Activated CD4-positive, alpha-beta T cell treated with anti-CD3 and anti-CD28 coated beads for 36 hours (primary cell): ENCODE measurements at regions of chr19 and their contacts with region 1.

Region 1: DNA sequence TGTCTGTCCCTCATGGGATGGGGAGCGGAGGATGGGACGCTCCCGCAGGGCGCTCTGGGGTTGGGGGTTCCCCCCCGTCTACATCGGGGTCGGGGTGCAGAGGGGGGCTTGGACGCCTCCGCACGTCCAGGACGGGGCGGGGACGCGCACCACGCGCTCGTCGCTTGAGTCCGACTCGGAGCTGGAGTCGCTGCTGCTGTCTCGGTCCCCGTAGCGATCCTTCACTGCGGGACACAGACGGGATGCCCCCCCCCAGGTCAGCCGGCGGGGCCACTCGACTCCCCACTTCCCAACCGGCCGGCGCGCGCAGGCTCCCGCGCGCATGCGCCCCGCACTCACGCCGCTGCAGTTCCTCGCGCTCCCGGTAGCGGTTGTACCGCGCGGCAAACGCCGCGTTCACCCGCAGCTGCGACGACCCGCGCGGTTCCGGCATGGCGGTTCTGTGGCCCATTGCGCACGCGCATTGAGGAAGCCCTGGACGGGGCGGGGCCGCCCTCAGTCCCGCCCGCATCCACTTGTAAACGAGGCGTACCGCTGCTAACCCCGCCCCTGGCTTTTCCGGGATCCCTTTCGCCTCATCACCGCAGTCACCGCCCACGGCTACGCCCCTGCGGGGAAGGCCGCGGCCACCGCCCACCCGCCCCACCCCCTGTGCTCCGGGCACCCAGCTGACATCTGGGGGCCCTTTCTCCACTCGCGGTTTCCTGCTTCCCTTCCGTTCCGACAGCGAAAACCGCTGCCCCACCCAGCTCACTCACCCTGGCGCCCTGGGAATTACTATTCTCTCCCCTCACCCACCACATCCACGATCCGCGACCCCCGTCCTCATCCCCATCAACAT is at the start of gene KRI1:
- DNase-seq: peak; percentile 100
- ATAC-seq: peak; percentile 39
- H3K4me3 Mint-ChIP-seq: peak within 1 kb of the TSS; percentile 98
- H3K27ac Mint-ChIP-seq: peak within 1 kb of the TSS; percentile 94
- H3K4me1 Mint-ChIP-seq: peaks cover 34% of the 10 kb centered on the region
- H3K27me3 Mint-ChIP-seq: no peaks in the 10 kb centered on the region
- total RNA-seq, gene KRI1: 62.5 to 67.1 TPM

Region 2: DNA sequence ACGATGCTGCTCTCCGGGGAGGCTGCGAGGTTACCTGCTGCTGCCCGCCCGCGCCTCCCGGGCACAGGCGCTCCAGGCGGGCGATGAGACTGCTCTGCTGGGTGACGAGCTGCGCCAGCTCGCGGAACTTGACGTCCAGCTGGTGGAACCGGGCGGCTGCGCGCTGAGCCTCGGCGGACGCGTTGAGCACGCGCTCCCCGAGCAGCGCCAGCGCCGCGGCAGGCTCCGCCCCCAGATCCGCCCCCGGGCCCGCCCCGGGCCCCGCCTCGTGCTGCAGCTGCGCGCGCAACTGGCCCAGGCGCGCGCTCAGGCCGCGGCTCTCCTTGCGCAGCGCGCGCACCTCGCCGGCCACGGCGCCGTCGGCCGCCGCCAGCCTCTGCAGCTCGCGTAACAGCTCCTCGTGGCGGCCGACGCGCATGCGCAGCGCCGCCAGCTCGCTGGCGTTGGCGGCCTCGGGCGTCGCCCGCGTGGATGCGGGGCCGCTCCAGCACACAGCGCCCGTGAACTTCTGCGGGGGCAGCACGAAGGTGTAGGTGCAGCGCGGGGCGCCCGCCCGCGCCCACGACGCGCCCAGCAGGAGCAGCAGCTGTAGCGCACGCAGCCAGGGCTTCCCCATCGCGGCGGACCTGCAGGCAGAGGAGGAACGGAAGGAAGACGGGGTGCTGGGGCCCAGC is 469.7 kb before region 1 on chr19:
- CTCF ChIA-PET with region 1: no interaction called
- POLR2A ChIA-PET with region 1: no interaction called
- intact Hi-C with region 1: loop called in 1 of 2 experiments (anchors 2 kb)
- DNase-seq: peak; percentile 94
- ATAC-seq: peak; percentile 90
- H3K4me3 Mint-ChIP-seq: peak overlapping the region; percentile 56
- H3K27ac Mint-ChIP-seq: peak overlapping the region; percentile 69
- H3K4me1 Mint-ChIP-seq: peaks cover 26% of the 10 kb centered on the region
- H3K27me3 Mint-ChIP-seq: no peaks in the 10 kb centered on the region

Region 3: GRCh38 chr19:10219678-10220077 is 346.1 kb before region 1 on chr19:
- CTCF ChIA-PET with region 1: no interaction called
- POLR2A ChIA-PET with region 1: no interaction called
- intact Hi-C with region 1: no loop called
- DNase-seq: peak; percentile 59
- ATAC-seq: peak; percentile 86
- H3K4me3 Mint-ChIP-seq: no peak overlapping the region
- H3K27ac Mint-ChIP-seq: no peak overlapping the region
- H3K4me1 Mint-ChIP-seq: peaks cover 2% of the 10 kb centered on the region
- H3K27me3 Mint-ChIP-seq: no peaks in the 10 kb centered on the region

Region 4: GRCh38 chr19:10315335-10316214 is 250.2 kb before region 1 on chr19 and contains the start of gene FDX2:
- CTCF ChIA-PET with region 1: no interaction called
- POLR2A ChIA-PET with region 1: no interaction called
- intact Hi-C with region 1: no loop called
- DNase-seq: peak; percentile 95
- ATAC-seq: peak; percentile 94
- H3K4me3 Mint-ChIP-seq: peak within 1 kb of the TSS; percentile 89
- H3K27ac Mint-ChIP-seq: peak within 1 kb of the TSS; percentile 80
- H3K4me1 Mint-ChIP-seq: peaks cover 16% of the 10 kb centered on the region
- H3K27me3 Mint-ChIP-seq: no peaks in the 10 kb centered on the region
- total RNA-seq, gene FDX2: 11.7 to 13.3 TPM

Region 5: DNA sequence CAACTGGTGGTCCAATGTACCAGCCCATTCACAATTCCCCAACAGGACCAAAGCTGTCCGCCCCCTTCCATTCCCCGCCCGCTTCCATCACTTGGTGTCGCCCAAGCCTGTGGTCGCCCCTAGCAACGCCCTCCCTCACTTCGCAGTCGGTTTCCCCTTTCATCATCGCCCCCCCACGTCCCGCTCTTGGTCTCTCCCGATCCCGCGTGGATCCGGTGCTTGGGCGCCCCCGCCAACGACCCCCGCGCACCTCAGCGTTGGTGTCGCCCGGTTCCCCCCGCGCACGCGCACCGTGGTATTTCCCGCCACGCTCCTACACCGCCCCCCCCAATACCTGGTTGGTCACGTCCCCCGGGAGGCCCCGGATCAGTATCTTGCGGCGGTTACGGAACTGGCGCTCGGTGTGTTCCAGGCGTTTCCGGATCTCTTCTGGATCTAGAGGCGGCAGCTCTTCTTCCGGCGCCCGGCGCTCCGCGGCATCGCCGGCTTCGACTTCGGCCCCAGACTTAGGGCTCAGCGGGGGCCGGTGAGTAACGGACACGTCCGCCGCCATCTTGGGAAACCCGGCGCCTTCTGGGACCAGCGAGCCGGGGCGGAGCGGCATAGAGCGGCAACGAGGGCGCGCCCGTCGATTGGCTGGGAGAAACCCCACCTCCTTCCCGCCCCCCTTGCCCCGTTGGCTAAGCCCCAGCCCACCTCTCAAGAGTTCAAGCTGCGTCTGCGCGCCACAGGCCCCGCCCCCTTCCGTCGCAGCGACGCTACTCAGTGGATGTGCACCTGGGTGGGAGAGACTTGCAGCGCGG is 232.6 kb before region 1 on chr19 and contains the start of gene RAVER1:
- CTCF ChIA-PET with region 1: no interaction called
- POLR2A ChIA-PET with region 1: no interaction called
- intact Hi-C with region 1: loop called (anchors 1 to 5 kb)
- DNase-seq: peak; percentile 99
- ATAC-seq: peak; percentile 97
- H3K4me3 Mint-ChIP-seq: peak within 1 kb of the TSS; percentile 97
- H3K27ac Mint-ChIP-seq: peak within 1 kb of the TSS; percentile 96
- H3K4me1 Mint-ChIP-seq: peaks cover 25% of the 10 kb centered on the region
- H3K27me3 Mint-ChIP-seq: no peaks in the 10 kb centered on the region
- total RNA-seq, gene RAVER1: 83.7 to 90.8 TPM

Region 6: GRCh38 chr19:10502524-10503001 is 63.2 kb before region 1 on chr19:
- CTCF ChIA-PET with region 1: interaction called, 4 read pairs
- POLR2A ChIA-PET with region 1: no interaction called
- intact Hi-C with region 1: loop called (anchors 1 to 2 kb)
- DNase-seq: peak; percentile 95
- ATAC-seq: peak; percentile 91
- H3K4me3 Mint-ChIP-seq: peak overlapping the region; percentile 91
- H3K27ac Mint-ChIP-seq: peak overlapping the region; percentile 95
- H3K4me1 Mint-ChIP-seq: peaks cover 30% of the 10 kb centered on the region
- H3K27me3 Mint-ChIP-seq: no peaks in the 10 kb centered on the region

Region 7: GRCh38 chr19:10612491-10613119 is 46.8 kb after region 1 on chr19:
- CTCF ChIA-PET with region 1: no interaction called
- POLR2A ChIA-PET with region 1: no interaction called
- intact Hi-C with region 1: no loop called
- DNase-seq: no peak
- ATAC-seq: no peak
- H3K4me3 Mint-ChIP-seq: no peak overlapping the region
- H3K27ac Mint-ChIP-seq: no peak overlapping the region
- H3K4me1 Mint-ChIP-seq: peaks cover 21% of the 10 kb centered on the region
- H3K27me3 Mint-ChIP-seq: no peaks in the 10 kb centered on the region

Region 8: GRCh38 chr19:10653715-10654492 is 88.1 kb after region 1 on chr19 and contains the start of gene ILF3:
- CTCF ChIA-PET with region 1: interaction called, 6 read pairs
- POLR2A ChIA-PET with region 1: interaction called, 6 read pairs
- intact Hi-C with region 1: loop called (anchors 1 to 2 kb)
- DNase-seq: peak; percentile 100
- ATAC-seq: peak; percentile 82
- H3K4me3 Mint-ChIP-seq: peak within 1 kb of the TSS; percentile 86
- H3K27ac Mint-ChIP-seq: peak within 1 kb of the TSS; percentile 97
- H3K4me1 Mint-ChIP-seq: peaks cover 34% of the 10 kb centered on the region
- H3K27me3 Mint-ChIP-seq: no peaks in the 10 kb centered on the region
- total RNA-seq, gene ILF3: 433 to 570 TPM

Region 9: DNA sequence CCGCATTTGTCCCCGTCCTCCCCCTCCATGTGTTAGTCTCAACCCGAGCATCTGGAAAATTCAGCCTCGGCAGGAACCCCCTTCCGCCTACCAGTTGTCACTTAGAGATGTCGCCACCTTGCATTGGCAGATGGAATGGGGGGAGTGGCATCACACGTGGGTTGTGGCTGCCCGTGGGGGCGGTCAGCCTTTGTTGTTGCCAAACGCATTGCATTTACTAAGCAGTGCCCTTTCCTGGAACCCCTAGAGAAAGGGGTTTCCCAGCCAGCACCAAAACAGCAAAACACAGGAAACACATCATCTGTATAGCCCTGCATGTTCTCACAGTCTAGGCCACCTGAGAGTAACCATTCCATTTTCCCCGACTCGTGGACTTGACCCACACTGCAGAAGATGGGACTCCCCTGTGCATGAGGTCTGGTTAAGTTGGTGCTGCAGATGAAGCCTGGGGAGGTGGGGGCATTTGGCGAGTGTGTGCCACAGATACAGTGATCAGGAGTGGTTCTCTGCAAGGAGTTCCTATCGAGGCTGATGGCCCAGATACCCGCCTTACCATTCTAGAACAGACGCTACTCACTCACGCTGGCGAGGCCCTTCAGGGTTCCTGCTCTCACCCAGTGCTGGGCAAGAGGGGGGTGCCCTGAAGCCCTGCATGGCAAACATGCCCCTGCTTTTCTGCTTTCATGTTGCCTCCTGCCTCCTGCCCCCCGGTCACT is 231.9 kb after region 1 on chr19:
- CTCF ChIA-PET with region 1: no interaction called
- POLR2A ChIA-PET with region 1: no interaction called
- intact Hi-C with region 1: loop called in 1 of 2 experiments (anchors 1 kb)
- DNase-seq: peak; percentile 95
- ATAC-seq: peak; percentile 94
- H3K4me3 Mint-ChIP-seq: peak overlapping the region; percentile 68
- H3K27ac Mint-ChIP-seq: peak overlapping the region; percentile 97
- H3K4me1 Mint-ChIP-seq: peaks cover 36% of the 10 kb centered on the region
- H3K27me3 Mint-ChIP-seq: no peaks in the 10 kb centered on the region